Dorsolateral prefrontal cortex (tissue), 120 donors: ENCODE measurements at regions of chr1 and their contacts with region 1.

Region 1: DNA sequence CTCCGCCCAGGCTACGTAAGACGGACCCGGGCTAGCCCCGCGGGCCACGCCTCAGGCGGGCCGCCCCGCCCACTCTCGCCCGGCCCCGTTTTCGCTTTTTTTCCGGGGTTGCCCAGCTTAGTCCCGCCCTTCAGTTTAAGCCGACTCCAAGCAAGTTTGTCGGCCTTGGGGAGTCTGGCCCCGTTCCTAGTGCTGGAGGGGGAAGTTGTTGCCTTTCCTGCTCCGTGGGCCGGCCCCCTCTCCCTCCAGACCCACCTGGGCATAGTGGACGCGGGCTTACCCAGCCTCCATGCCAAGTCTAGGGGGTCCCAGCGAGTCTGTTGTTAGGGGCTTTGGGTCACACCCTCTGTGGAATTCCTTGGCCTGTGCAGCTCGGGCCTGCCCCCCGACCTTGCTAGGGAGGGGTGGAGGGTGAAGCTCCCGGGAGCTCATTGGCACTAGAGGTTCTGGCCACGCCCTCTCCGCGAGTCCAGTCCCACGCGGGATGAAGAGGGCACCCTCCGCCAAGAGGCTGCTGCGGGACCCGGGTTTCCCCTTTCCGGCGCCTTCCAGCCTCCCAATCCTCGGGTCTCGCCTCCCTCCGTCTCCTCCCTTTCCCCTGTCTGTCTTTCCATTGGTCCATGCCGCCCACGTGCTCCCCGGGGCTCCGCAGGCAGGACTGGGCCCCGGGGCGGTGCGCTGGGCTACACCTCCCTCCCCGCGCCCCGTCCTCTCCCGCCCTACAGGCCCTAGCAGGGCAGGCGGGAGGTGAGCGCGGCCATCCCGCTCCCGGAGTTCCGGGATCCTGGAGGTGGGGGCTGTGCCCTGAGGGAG is 3.3 kb downstream of the RUSC1 start:
- DNase-seq: peak; percentile 90 to 97 (median 92)
- H3K4me3 ChIP-seq: peak overlapping the region; percentile 52 to 100 (median 82)
- H3K27ac ChIP-seq: peak overlapping the region; percentile 26 to 97 (median 92)
- H3K27me3 ChIP-seq: no peaks in the 10 kb centered on the region
- CTCF ChIP-seq: peak in 29 of 56 donors; percentile 2 to 53 (median 31)

Region 2: DNA sequence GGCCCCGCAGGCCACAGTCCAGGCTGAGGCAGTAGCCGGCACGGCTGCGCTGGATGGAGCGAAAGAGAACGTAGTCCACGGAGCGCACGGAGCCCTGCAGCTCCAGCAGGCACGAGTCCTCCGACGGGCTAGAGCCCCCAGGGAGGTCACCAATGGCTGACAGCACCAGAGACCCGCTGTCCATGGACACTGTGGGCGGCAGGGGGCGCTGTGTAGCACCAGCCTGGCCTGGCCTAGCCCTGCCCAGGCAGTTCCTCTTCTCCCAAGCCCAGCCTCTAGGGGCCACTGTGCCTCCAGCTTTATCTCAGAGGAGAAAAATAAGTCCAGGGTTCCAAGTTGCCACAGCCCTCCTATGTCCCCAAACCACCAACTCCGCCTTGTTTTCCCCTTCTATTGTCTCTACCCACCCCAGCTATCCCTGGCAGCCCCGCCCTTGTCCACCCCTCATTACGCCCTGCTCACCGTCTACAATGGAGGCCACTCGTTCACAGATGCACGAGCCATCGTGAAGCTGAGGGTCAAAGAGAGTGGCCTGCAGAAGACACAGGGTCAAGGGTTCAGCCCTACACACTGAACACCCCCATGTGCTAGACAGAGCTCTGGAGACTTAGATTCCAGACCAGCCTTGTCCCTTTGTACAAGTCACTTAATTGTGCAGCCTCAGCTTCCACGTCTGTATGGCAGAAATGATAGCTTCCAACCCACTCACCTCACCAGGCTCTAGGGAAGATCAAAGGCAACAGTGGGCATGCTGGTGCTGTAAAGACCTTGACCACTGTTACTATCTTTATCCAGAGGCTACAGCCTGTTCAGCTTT is 73.2 kb before region 1 on chr1:
- intact Hi-C with region 1: loop called (anchors 2 to 5 kb)
- DNase-seq: peak; percentile 89 to 95 (median 92)
- H3K4me3 ChIP-seq: peak overlapping the region in 52 of 59 donors; percentile 3 to 53 (median 28)
- H3K27ac ChIP-seq: peak overlapping the region in 53 of 59 donors; percentile 6 to 89 (median 71)
- H3K27me3 ChIP-seq: no peaks in the 10 kb centered on the region
- CTCF ChIP-seq: peak; percentile 97 to 100 (median 100)

Region 3: GRCh38 chr1:155308493-155309422 is 15.2 kb before region 1 on chr1 and contains the start of gene FDPS:
- intact Hi-C with region 1: loop called (anchors 2 kb)
- DNase-seq: peak; percentile 99 to 100 (median 100)
- H3K4me3 ChIP-seq: peak within 1 kb of the TSS; percentile 61 to 100 (median 86)
- H3K27ac ChIP-seq: peak within 1 kb of the TSS; percentile 74 to 98 (median 94)
- H3K27me3 ChIP-seq: no peaks in the 10 kb centered on the region
- CTCF ChIP-seq: peak in 42 of 56 donors; percentile 9 to 67 (median 41)
- total RNA-seq, gene FDPS: 72.8 to 199 (median 118) TPM

Region 4: DNA sequence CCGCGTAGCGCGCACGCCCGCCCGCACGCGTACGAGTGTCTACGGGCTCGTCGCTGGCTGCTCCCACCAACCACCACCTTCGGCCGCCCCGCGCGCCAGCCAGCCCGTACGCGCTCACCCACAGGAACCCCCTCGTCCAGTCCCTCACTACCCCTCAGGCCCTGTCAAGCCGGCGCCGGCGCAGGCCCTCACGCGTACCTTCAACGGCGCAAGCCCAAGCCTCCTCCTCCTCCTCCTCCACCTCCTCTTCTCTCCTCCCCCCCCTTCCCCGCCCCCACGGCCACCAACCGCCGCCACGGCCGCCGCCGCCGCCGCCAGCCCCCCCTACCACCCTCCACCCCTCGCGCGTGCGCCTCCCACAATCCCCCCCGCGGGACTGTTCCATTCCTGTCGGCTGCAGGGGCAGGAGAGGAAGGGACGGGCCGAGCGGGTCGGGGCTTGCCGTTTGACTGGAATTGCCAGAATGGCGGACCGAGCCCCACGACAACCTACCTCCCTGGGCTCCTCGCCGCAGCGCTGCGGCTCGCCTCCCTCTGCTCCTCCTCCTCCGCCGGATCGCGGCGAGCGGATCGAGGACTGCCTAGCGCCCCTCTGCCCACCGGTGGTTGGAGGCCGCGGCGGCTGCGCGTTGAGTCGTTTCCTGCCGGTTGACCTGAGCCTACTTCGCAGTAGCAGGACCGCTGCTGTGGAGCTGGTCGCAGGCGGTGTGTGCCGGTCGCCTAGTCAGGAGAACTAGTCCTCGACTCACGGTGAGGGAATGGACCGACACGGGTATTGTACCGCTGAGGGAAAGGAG is 238.8 kb after region 1 on chr1 and contains the start of gene ASH1L:
- intact Hi-C with region 1: loop called (anchors 2 to 5 kb)
- DNase-seq: peak; percentile 88 to 95 (median 92)
- H3K4me3 ChIP-seq: peak within 1 kb of the TSS; percentile 73 to 99 (median 89)
- H3K27ac ChIP-seq: peak within 1 kb of the TSS; percentile 91 to 100 (median 98)
- H3K27me3 ChIP-seq: no peaks in the 10 kb centered on the region
- CTCF ChIP-seq: peak in 3 of 56 donors; percentile 12 to 27 (median 16)
- total RNA-seq, gene ASH1L: 98.7 to 145 (median 120) TPM